Gastrocnemius medialis (tissue), 4 donors: ENCODE measurements at regions of chr17 and their contacts with region 1.

Region 1: DNA sequence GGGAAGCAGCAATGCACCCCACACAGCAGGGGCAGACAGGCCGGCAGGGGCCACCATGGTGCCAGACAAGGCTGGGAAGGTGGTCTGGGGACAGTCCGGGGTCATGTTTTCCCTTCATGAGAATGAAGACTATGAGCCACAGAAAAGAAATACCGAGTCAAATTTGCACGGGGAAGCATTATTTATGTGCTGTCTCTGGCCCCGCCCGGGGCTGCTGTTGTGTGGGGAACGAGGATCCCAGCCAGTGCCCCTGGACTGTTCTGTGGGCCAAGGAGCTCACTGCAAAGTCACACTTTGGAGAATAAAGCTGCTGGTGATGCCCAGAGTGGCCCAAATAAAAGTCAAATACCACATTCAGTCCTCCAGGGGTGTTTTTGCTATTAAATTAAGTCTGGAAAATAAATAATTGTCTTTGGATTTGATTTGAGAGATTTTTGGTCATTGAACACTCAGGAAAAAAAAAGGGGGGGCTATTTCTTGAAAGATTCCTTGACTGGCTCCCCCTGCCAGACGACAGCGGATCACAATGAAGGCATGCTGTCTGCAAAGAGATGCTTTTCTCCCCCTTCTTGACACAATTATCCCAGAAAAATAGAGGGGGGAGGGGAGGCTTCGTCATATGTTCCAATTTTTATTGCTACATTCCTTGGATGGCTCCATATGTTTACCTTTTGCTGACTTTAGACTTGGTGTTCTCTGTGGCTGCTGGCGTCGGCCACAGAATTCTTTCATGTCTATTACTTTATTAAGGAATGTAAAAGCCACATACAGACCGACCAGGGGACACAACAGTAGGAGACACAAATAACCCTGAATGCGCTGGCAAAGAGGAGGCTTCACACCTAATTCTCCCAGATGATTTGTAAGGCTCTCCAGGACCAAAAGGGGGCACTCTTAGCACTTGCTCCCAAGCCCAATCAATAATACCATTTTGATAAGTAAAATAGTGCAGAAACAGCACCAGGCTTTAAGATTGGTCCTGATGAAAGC is 27.1 kb upstream of the ANKFN1 start:
- DNase-seq: no peak
- ATAC-seq: no peak
- H3K4me3 ChIP-seq: no peak overlapping the region
- H3K27ac ChIP-seq: no peak overlapping the region
- H3K4me1 ChIP-seq: no peaks in the 10 kb centered on the region
- H3K27me3 ChIP-seq: no peaks in the 10 kb centered on the region
- CTCF ChIP-seq: peak; percentile 24 to 53 (median 37)
- POLR2A ChIP-seq: no peak

Region 2: DNA sequence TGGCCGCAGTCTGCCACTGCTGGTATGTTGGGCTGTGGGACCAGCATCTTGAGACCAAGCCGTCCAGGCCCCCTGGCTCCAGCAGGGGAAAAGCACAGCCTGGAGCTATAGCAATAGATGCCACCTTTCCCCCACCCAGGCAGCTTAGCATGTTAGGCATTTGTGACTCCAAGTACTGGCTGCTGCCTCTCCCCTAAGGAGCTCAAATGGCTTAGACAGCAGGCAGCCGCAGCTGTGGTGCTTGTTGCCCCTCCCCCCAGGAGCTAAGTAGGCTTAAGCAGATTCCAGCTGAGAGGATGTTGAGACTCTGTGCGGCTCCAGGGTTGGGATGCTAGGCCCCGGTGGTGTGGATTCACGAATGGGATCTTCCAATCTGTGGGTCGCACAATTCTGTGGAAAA is 61.6 kb before region 1 on chr17:
- in situ Hi-C with region 1: loop called in 1 of 4 experiments (anchors 10 kb)
- intact Hi-C with region 1: no loop called
- DNase-seq: no peak
- ATAC-seq: no peak
- H3K4me3 ChIP-seq: no peak overlapping the region
- H3K27ac ChIP-seq: no peak overlapping the region
- H3K4me1 ChIP-seq: no peaks in the 10 kb centered on the region
- H3K27me3 ChIP-seq: no peaks in the 10 kb centered on the region
- CTCF ChIP-seq: no peak
- POLR2A ChIP-seq: no peak

Region 3: GRCh38 chr17:56325313-56326000 is 199.3 kb after region 1 on chr17:
- in situ Hi-C with region 1: loop called in 3 of 4 experiments (anchors 10 to 25 kb)
- intact Hi-C with region 1: no loop called
- DNase-seq: no peak
- ATAC-seq: no peak
- H3K4me3 ChIP-seq: no peak overlapping the region
- H3K27ac ChIP-seq: no peak overlapping the region
- H3K4me1 ChIP-seq: no peaks in the 10 kb centered on the region
- H3K27me3 ChIP-seq: peaks cover 0 to 6% (median 3%) of the 10 kb centered on the region in 3 donors
- CTCF ChIP-seq: no peak
- POLR2A ChIP-seq: no peak

Region 4: GRCh38 chr17:56367366-56367765 is 241.2 kb after region 1 on chr17:
- in situ Hi-C with region 1: no loop called
- intact Hi-C with region 1: no loop called
- DNase-seq: no peak
- ATAC-seq: no peak
- H3K4me3 ChIP-seq: no peak overlapping the region
- H3K27ac ChIP-seq: no peak overlapping the region
- H3K4me1 ChIP-seq: no peaks in the 10 kb centered on the region
- H3K27me3 ChIP-seq: no peaks in the 10 kb centered on the region
- CTCF ChIP-seq: no peak
- POLR2A ChIP-seq: no peak